ENCODE measurements at regions of chr18 and their contacts with region 1.

Region 1: DNA sequence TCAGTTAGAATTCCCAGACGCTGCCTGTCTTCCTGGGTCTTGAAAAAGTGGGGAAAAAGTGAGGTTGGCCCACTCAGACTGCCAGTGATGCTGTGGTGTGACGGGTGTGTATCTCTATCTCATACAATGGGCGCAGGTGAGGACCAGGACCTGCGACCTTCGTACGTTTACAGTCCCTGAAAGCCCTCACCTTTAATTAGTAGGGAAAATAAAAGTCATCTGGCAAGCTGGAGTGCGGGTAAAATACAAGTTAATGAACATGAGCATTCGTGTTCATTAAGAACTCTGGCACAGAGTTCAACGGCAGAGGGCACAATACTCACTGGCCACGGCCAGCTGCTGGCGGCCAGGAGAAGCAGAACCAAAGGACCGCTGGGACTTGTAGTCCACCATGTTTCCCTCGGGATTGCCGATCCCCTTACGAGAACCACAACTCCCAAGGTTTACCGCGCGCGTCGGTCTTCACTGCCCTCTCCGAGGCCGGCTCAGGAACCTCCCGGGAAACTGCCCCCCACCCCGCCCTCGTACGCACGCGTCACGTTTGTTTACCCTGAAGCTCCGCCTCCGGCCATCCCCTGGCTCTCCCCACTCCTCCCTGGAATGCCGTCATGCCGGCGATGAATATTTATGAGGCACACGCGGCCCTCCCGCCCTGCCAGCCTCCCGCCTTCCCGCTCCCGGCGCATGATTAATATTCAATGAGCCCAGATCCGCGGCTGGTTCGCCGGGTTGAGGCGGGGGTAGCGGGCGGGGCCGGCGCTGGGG is 488 bp upstream of the PHLPP1 start:
- DNase-seq: peak; percentile 99
- ATAC-seq: peak; percentile 91 to 92
- H3K4me3 ChIP-seq: peak overlapping the region; percentile 68 to 78 (median 70)
- H3K27ac ChIP-seq: peak overlapping the region; percentile 92 to 95 (median 94)
- H3K4me1 ChIP-seq: peaks cover 19 to 32% of the 10 kb centered on the region in 2 donors
- H3K27me3 ChIP-seq: no peaks in the 10 kb centered on the region
- CTCF ChIP-seq: peak; percentile 58 to 82 (median 68)
- POLR2A ChIP-seq: no peak

Region 2: GRCh38 chr18:62186774-62187542 is 527.9 kb before region 1 on chr18 and contains the starts of genes PIGN and RELCH:
- in situ Hi-C with region 1: loop called in 1 of 4 experiments (anchors 25 kb)
- intact Hi-C with region 1: no loop called
- DNase-seq: peak; percentile 96 to 98
- ATAC-seq: peak; percentile 97 to 98
- H3K4me3 ChIP-seq: peak within 1 kb of the TSS; percentile 94 to 99 (median 97)
- H3K27ac ChIP-seq: peak within 1 kb of the TSS; percentile 84 to 90 (median 87)
- H3K4me1 ChIP-seq: peaks cover 26 to 36% of the 10 kb centered on the region in 2 donors
- H3K27me3 ChIP-seq: no peaks in the 10 kb centered on the region
- CTCF ChIP-seq: peak in 1 of 5 experiments; percentile 8
- POLR2A ChIP-seq: peak; percentile 58 to 82
- total RNA-seq, gene PIGN: 10.7 to 18.7 (median 14.8) TPM
- total RNA-seq, gene RELCH: 8.4 to 16.8 (median 12.6) TPM

Region 3: GRCh38 chr18:62425465-62426195 is 289.2 kb before region 1 on chr18:
- in situ Hi-C with region 1: no loop called
- intact Hi-C with region 1: loop called (anchors 1 kb)
- DNase-seq: peak; percentile 86 to 92
- ATAC-seq: peak; percentile 81 to 82
- H3K4me3 ChIP-seq: peak overlapping the region; percentile 31 to 48 (median 40)
- H3K27ac ChIP-seq: peak overlapping the region; percentile 85 to 97 (median 96)
- H3K4me1 ChIP-seq: peaks cover 23 to 25% of the 10 kb centered on the region in 2 donors
- H3K27me3 ChIP-seq: no peaks in the 10 kb centered on the region
- CTCF ChIP-seq: peak; percentile 88 to 93 (median 90)
- POLR2A ChIP-seq: peak; percentile 45 to 73

Region 4: GRCh38 chr18:62522504-62523254 is 192.2 kb before region 1 on chr18 and contains the start of gene ZCCHC2:
- in situ Hi-C with region 1: no loop called
- intact Hi-C with region 1: loop called (anchors 2 kb)
- DNase-seq: peak; percentile 98
- ATAC-seq: peak; percentile 56 to 68
- H3K4me3 ChIP-seq: peak within 1 kb of the TSS; percentile 74 to 96 (median 86)
- H3K27ac ChIP-seq: peak within 1 kb of the TSS; percentile 98 to 100 (median 99)
- H3K4me1 ChIP-seq: peaks cover 17 to 27% of the 10 kb centered on the region in 2 donors
- H3K27me3 ChIP-seq: no peaks in the 10 kb centered on the region
- CTCF ChIP-seq: no peak
- POLR2A ChIP-seq: peak; percentile 95 to 98
- total RNA-seq, gene ZCCHC2: 22.1 to 37.9 (median 32.0) TPM

Region 5: GRCh38 chr18:62784966-62785413 is 70.1 kb after region 1 on chr18:
- in situ Hi-C with region 1: no loop called
- intact Hi-C with region 1: loop called (anchors 5 kb)
- DNase-seq: no peak
- ATAC-seq: no peak
- H3K4me3 ChIP-seq: no peak overlapping the region
- H3K27ac ChIP-seq: no peak overlapping the region
- H3K4me1 ChIP-seq: peaks cover 12% of the 10 kb centered on the region in 2 donors
- H3K27me3 ChIP-seq: no peaks in the 10 kb centered on the region
- CTCF ChIP-seq: no peak
- POLR2A ChIP-seq: no peak

Region 6: DNA sequence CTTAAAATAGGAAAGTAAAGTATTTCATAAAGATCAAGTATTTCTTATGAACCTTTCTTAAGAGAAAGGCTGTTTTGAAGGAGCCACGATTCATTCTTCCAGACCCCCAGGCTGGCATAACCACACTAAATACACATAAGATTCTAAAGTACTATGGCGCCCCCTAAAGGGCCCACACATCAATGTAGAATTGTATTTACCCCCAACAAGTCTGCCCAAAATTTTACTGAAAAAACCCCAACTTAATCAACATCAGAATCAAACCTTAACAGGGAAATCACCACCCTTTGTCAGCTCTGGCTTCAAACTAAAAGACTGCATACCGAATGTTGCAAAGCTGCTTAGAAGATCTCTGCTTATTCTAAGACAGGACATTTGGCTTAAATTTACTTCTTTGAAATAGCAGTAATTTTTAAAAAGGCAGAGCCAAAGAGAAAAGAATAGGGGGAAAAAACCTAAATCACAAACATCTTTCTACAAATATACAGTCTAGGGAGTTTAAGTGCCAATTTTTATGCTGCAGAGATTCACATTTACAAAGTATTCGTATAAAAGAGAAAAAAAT is 625.1 kb after region 1 on chr18:
- in situ Hi-C with region 1: loop called in 1 of 4 experiments (anchors 25 kb)
- intact Hi-C with region 1: no loop called
- DNase-seq: no peak
- ATAC-seq: no peak
- H3K4me3 ChIP-seq: no peak overlapping the region
- H3K27ac ChIP-seq: no peak overlapping the region
- H3K4me1 ChIP-seq: peaks cover 0 to 4% of the 10 kb centered on the region in 2 donors
- H3K27me3 ChIP-seq: no peaks in the 10 kb centered on the region
- CTCF ChIP-seq: peak; percentile 10 to 50 (median 24)
- POLR2A ChIP-seq: no peak

Region 7: GRCh38 chr18:63422087-63422809 is 707.4 kb after region 1 on chr18 and contains the start of gene VPS4B:
- in situ Hi-C with region 1: loop called in 3 of 4 experiments (anchors 10 to 25 kb)
- intact Hi-C with region 1: loop called (anchors 1 kb)
- DNase-seq: peak; percentile 98 to 99
- ATAC-seq: peak; percentile 99
- H3K4me3 ChIP-seq: peak within 1 kb of the TSS; percentile 93 to 96 (median 94)
- H3K27ac ChIP-seq: peak within 1 kb of the TSS; percentile 88 to 97 (median 93)
- H3K4me1 ChIP-seq: peaks cover 14 to 16% of the 10 kb centered on the region in 2 donors
- H3K27me3 ChIP-seq: no peaks in the 10 kb centered on the region
- CTCF ChIP-seq: peak in 1 of 5 experiments; percentile 20
- POLR2A ChIP-seq: peak; percentile 81 to 84
- total RNA-seq, gene VPS4B: 13.4 to 18.2 (median 16.0) TPM